ENCODE measurements at regions of chr20 and their contacts with region 1.

Region 1: DNA sequence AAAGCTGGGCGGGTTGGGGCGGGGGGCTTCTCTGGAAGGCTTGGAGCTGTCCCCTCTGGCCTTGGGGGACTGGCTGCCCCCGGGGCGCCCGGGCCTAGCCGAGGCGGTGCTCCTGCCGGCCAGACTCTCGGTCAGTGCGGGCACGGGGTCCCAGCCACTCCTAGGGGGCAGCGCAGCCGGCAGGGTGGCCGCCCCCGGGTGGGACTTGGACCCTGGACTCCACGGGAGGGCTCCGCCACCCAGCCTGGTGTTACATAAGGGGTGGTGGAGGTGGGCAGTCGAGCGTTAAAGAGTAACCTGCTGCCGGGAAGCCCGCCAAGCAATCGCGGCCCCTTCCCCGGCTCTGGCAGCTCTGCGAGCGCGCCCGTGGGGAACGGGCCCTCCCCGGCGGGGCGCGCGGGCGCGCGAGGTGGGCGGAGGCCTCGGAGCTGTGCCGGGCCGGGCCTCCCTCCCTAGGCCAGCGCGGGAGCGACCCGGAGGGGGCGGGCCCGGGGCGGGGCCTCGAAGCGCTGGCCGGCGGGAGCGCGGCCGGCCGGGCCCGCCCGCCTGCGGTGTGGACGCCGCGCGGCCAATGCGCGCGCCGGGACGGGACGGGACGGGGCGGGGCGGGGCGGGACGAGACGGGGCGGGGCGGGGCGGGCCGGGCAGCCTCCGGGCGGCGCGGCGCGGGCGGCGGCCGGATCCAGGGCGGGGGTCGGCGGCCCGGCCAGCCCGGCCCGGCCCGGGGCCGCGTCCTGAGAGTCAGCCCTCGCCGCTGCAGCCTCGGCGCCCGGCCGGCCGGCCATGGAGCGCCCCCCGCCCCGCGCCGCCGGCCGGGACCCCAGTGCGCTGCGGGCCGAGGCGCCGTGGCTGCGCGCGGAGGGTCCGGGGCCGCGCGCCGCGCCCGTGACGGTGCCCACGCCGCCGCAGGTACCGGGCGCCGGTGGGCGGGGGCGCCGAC is at the start of gene SLC2A4RG:
- DNase-seq: peak in 11 of 14 experiments; percentile 49 to 90 (median 72)
- ATAC-seq: peak; percentile 8
- H3K4me3 ChIP-seq: peak within 1 kb of the TSS; percentile 92
- H3K4me3 Mint-ChIP-seq: peak within 1 kb of the TSS; percentile 80
- H3K27ac ChIP-seq: peak within 1 kb of the TSS; percentile 34 to 53
- H3K27ac Mint-ChIP-seq: no peak within 1 kb of the TSS
- H3K4me1 ChIP-seq: peaks cover 56% of the 10 kb centered on the region
- H3K4me1 Mint-ChIP-seq: peaks cover 16% of the 10 kb centered on the region
- H3K27me3 ChIP-seq: no peaks in the 10 kb centered on the region
- H3K27me3 Mint-ChIP-seq: no peaks in the 10 kb centered on the region
- CTCF ChIP-seq: no peak
- total RNA-seq, gene SLC2A4RG: 123 to 125 TPM

Region 2: GRCh38 chr20:63520504-63520933 is 218.9 kb before region 1 on chr20 and contains the start of gene PPDPF:
- CTCF ChIA-PET with region 1: no interaction called
- POLR2A ChIA-PET with region 1: interaction called, 10 read pairs
- intact Hi-C with region 1: no loop called
- DNase-seq: peak; percentile 75 to 95 (median 84)
- ATAC-seq: peak; percentile 80
- H3K4me3 ChIP-seq: peak within 1 kb of the TSS; percentile 65
- H3K4me3 Mint-ChIP-seq: peak within 1 kb of the TSS; percentile 88
- H3K27ac ChIP-seq: peak within 1 kb of the TSS in 1 of 2 donors; percentile 35
- H3K27ac Mint-ChIP-seq: peak within 1 kb of the TSS; percentile 69
- H3K4me1 ChIP-seq: peaks cover 29% of the 10 kb centered on the region
- H3K4me1 Mint-ChIP-seq: peaks cover 13% of the 10 kb centered on the region
- H3K27me3 ChIP-seq: no peaks in the 10 kb centered on the region
- H3K27me3 Mint-ChIP-seq: no peaks in the 10 kb centered on the region
- CTCF ChIP-seq: no peak
- total RNA-seq, gene PPDPF: 249 to 251 TPM

Region 3: GRCh38 chr20:63635431-63636141 is 103.8 kb before region 1 on chr20:
- CTCF ChIA-PET with region 1: no interaction called
- POLR2A ChIA-PET with region 1: interaction called, 10 read pairs
- intact Hi-C with region 1: no loop called
- DNase-seq: peak; percentile 66 to 93 (median 76)
- ATAC-seq: peak; percentile 57
- H3K4me3 ChIP-seq: peak overlapping the region; percentile 40
- H3K4me3 Mint-ChIP-seq: peak overlapping the region; percentile 88
- H3K27ac ChIP-seq: peak overlapping the region; percentile 77 to 85
- H3K27ac Mint-ChIP-seq: peak overlapping the region; percentile 100
- H3K4me1 ChIP-seq: peaks cover 93% of the 10 kb centered on the region
- H3K4me1 Mint-ChIP-seq: peaks cover 62% of the 10 kb centered on the region
- H3K27me3 ChIP-seq: no peaks in the 10 kb centered on the region
- H3K27me3 Mint-ChIP-seq: no peaks in the 10 kb centered on the region
- CTCF ChIP-seq: no peak

Region 4: GRCh38 chr20:63657937-63658748 is 81.3 kb before region 1 on chr20 and contains the start of gene RTEL1:
- CTCF ChIA-PET with region 1: no interaction called
- POLR2A ChIA-PET with region 1: interaction called, 8 read pairs
- intact Hi-C with region 1: loop called (anchors 5 to 10 kb)
- DNase-seq: peak; percentile 77 to 93 (median 86)
- ATAC-seq: peak; percentile 83
- H3K4me3 ChIP-seq: peak within 1 kb of the TSS; percentile 76
- H3K4me3 Mint-ChIP-seq: peak within 1 kb of the TSS; percentile 98
- H3K27ac ChIP-seq: peak within 1 kb of the TSS; percentile 56 to 87
- H3K27ac Mint-ChIP-seq: peak within 1 kb of the TSS; percentile 96
- H3K4me1 ChIP-seq: peaks cover 47% of the 10 kb centered on the region
- H3K4me1 Mint-ChIP-seq: peaks cover 38% of the 10 kb centered on the region
- H3K27me3 ChIP-seq: no peaks in the 10 kb centered on the region
- H3K27me3 Mint-ChIP-seq: no peaks in the 10 kb centered on the region
- CTCF ChIP-seq: no peak
- total RNA-seq, gene RTEL1: 25.5 to 27.6 TPM

Region 5: DNA sequence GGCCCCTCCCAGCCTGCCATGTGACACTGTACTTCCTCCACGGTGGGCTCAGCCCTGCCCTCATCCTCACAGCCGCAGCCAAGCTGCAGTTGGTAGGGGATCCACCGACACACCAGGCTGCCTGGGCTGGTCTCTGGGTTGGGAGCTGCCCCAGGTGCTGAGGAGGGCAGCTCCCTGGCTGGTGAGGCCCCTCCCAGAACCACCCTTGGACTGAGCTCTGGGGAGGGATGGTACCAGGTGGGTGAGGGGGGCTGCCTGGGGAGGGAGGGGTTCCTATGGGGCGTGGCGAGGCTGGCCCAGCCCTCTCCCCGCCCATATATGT is 43.1 kb before region 1 on chr20:
- CTCF ChIA-PET with region 1: no interaction called
- POLR2A ChIA-PET with region 1: interaction called, 11 read pairs
- intact Hi-C with region 1: no loop called
- DNase-seq: peak in 7 of 14 experiments; percentile 18 to 62 (median 34)
- ATAC-seq: peak; percentile 72
- H3K4me3 ChIP-seq: peak overlapping the region; percentile 36
- H3K4me3 Mint-ChIP-seq: peak overlapping the region; percentile 42
- H3K27ac ChIP-seq: no peak overlapping the region
- H3K27ac Mint-ChIP-seq: peak overlapping the region; percentile 74
- H3K4me1 ChIP-seq: peaks cover 64% of the 10 kb centered on the region
- H3K4me1 Mint-ChIP-seq: peaks cover 4% of the 10 kb centered on the region
- H3K27me3 ChIP-seq: no peaks in the 10 kb centered on the region
- H3K27me3 Mint-ChIP-seq: no peaks in the 10 kb centered on the region
- CTCF ChIP-seq: no peak

Region 6: DNA sequence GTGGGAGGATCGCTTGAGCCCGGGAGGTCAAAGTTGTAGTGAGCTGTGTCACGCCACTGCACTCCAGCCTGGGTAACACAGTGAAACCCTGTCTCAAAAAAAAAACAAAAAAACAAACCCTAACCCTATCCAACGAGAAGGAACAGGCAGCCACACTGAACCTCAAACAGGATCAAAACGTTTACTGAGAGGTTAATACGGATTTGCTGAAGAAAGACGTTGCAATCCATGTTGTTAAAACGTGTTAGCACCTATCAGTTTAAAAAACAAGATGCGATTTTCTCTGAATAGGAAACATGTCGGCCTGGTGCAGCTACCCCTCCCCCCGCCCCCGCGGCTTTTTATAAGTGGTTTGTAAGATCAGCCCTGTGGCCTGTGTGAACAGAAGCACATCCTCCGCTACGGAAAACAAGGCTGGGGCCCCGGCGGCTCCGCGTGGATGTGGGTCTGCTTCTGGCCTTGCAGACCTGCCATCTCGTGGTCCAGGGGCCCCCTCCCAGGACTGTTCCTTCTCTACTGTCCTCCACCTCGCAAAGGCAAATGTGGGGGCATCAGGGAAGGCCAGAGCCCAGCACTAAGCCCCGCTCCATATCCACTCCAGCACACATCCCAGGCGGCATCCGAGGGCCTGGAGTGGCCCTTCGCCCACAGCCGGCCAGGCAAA is 11.5 kb after region 1 on chr20:
- CTCF ChIA-PET with region 1: interaction called, 5 read pairs
- POLR2A ChIA-PET with region 1: interaction called, 118 read pairs
- intact Hi-C with region 1: loop called in 1 of 2 experiments (anchors 1 kb)
- DNase-seq: peak; percentile 44 to 86 (median 67)
- ATAC-seq: peak; percentile 93
- H3K4me3 ChIP-seq: peak overlapping the region; percentile 9
- H3K4me3 Mint-ChIP-seq: peak overlapping the region; percentile 81
- H3K27ac ChIP-seq: peak overlapping the region; percentile 37 to 70
- H3K27ac Mint-ChIP-seq: peak overlapping the region; percentile 93
- H3K4me1 ChIP-seq: peaks cover 35% of the 10 kb centered on the region
- H3K4me1 Mint-ChIP-seq: peaks cover 32% of the 10 kb centered on the region
- H3K27me3 ChIP-seq: no peaks in the 10 kb centered on the region
- H3K27me3 Mint-ChIP-seq: no peaks in the 10 kb centered on the region
- CTCF ChIP-seq: no peak

Region 7: GRCh38 chr20:63782051-63782471 is 42.7 kb after region 1 on chr20:
- CTCF ChIA-PET with region 1: interaction called, 17 read pairs
- POLR2A ChIA-PET with region 1: interaction called, 6 read pairs
- intact Hi-C with region 1: loop called (anchors 2 to 5 kb)
- DNase-seq: peak in 13 of 14 experiments; percentile 16 to 88 (median 48)
- ATAC-seq: peak; percentile 93
- H3K4me3 ChIP-seq: peak overlapping the region; percentile 14
- H3K4me3 Mint-ChIP-seq: peak overlapping the region; percentile 43
- H3K27ac ChIP-seq: peak overlapping the region in 1 of 2 donors; percentile 22
- H3K27ac Mint-ChIP-seq: peak overlapping the region; percentile 67
- H3K4me1 ChIP-seq: peaks cover 23% of the 10 kb centered on the region
- H3K4me1 Mint-ChIP-seq: peaks cover 23% of the 10 kb centered on the region
- H3K27me3 ChIP-seq: no peaks in the 10 kb centered on the region
- H3K27me3 Mint-ChIP-seq: no peaks in the 10 kb centered on the region
- CTCF ChIP-seq: peak; percentile 51

Measured in CD4-positive, alpha-beta T cell (primary cell).